ENCODE measurements at regions of chr2 and their contacts with region 1.

Region 1: GRCh38 chr2:47323009-47323821 is 79.7 kb upstream of the MSH2 start:
- DNase-seq: peak; percentile 68 to 69
- ATAC-seq: peak; percentile 93 to 97 (median 94)
- H3K4me3 ChIP-seq: no peak overlapping the region
- H3K27ac ChIP-seq: no peak overlapping the region
- H3K4me1 ChIP-seq: peaks cover 0 to 10% (median 4%) of the 10 kb centered on the region in 9 donors
- H3K27me3 ChIP-seq: no peaks in the 10 kb centered on the region
- CTCF ChIP-seq: peak; percentile 93 to 98 (median 96)

Region 2: GRCh38 chr2:46632349-46632748 is 690.9 kb before region 1 on chr2:
- intact Hi-C with region 1: loop called in 3 of 10 experiments (anchors 5 to 10 kb)
- DNase-seq: no peak
- ATAC-seq: peak in 1 of 8 donors; percentile 33
- H3K4me3 ChIP-seq: no peak overlapping the region
- H3K27ac ChIP-seq: no peak overlapping the region
- H3K4me1 ChIP-seq: no peaks in the 10 kb centered on the region
- H3K27me3 ChIP-seq: no peaks in the 10 kb centered on the region
- CTCF ChIP-seq: peak in 8 of 9 donors; percentile 43 to 74 (median 66)

Region 3: GRCh38 chr2:46915811-46916630 is 407.2 kb before region 1 on chr2:
- intact Hi-C with region 1: loop called in 7 of 10 experiments (anchors 1 to 5 kb)
- DNase-seq: peak; percentile 91 to 92
- ATAC-seq: peak; percentile 90 to 96 (median 95)
- H3K4me3 ChIP-seq: peak overlapping the region; percentile 81 to 100 (median 97)
- H3K27ac ChIP-seq: peak overlapping the region; percentile 89 to 99 (median 96)
- H3K4me1 ChIP-seq: peaks cover 7 to 53% (median 35%) of the 10 kb centered on the region in 9 donors
- H3K27me3 ChIP-seq: no peaks in the 10 kb centered on the region
- CTCF ChIP-seq: no peak

Region 4: GRCh38 chr2:46923041-46923528 is 400.1 kb before region 1 on chr2:
- intact Hi-C with region 1: loop called in 7 of 10 experiments (anchors 1 to 5 kb)
- DNase-seq: no peak
- ATAC-seq: no peak
- H3K4me3 ChIP-seq: no peak overlapping the region
- H3K27ac ChIP-seq: no peak overlapping the region
- H3K4me1 ChIP-seq: peaks cover 0 to 5% (median 0%) of the 10 kb centered on the region in 9 donors
- H3K27me3 ChIP-seq: no peaks in the 10 kb centered on the region
- CTCF ChIP-seq: no peak

Region 5: GRCh38 chr2:46988733-46989481 is 334.3 kb before region 1 on chr2:
- intact Hi-C with region 1: loop called in 1 of 10 experiments (anchors 1 kb)
- DNase-seq: peak in 1 of 2 donors; percentile 51
- ATAC-seq: peak in 4 of 8 donors; percentile 20 to 46 (median 32)
- H3K4me3 ChIP-seq: no peak overlapping the region
- H3K27ac ChIP-seq: peak overlapping the region in 8 of 10 donors; percentile 30 to 78 (median 63)
- H3K4me1 ChIP-seq: peaks cover 41 to 68% (median 59%) of the 10 kb centered on the region in 9 donors
- H3K27me3 ChIP-seq: no peaks in the 10 kb centered on the region
- CTCF ChIP-seq: peak in 5 of 9 donors; percentile 10 to 40 (median 29)

Region 6: DNA sequence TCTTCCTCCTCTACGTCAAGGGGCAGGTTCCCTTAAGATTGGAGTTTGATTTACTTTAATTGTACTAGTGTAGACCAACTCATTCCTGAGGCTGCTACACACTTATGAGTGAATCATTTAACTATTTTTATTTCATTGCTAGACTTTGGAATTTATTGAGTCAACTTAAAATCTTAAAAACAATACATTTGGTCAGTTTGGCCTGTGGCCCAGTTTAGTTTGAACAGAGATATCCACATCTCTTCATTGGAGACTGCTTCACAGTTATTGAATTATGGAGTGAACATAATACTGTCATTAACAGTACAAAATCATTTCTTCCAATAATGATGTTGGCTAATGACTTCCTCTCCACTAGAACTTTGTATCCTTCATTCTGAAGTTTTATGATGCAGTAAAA is 133.6 kb before region 1 on chr2:
- intact Hi-C with region 1: loop called in 1 of 10 experiments (anchors 10 kb)
- DNase-seq: no peak
- ATAC-seq: no peak
- H3K4me3 ChIP-seq: no peak overlapping the region
- H3K27ac ChIP-seq: no peak overlapping the region
- H3K4me1 ChIP-seq: peaks cover 0 to 26% (median 17%) of the 10 kb centered on the region in 9 donors
- H3K27me3 ChIP-seq: no peaks in the 10 kb centered on the region
- CTCF ChIP-seq: no peak

Region 7: DNA sequence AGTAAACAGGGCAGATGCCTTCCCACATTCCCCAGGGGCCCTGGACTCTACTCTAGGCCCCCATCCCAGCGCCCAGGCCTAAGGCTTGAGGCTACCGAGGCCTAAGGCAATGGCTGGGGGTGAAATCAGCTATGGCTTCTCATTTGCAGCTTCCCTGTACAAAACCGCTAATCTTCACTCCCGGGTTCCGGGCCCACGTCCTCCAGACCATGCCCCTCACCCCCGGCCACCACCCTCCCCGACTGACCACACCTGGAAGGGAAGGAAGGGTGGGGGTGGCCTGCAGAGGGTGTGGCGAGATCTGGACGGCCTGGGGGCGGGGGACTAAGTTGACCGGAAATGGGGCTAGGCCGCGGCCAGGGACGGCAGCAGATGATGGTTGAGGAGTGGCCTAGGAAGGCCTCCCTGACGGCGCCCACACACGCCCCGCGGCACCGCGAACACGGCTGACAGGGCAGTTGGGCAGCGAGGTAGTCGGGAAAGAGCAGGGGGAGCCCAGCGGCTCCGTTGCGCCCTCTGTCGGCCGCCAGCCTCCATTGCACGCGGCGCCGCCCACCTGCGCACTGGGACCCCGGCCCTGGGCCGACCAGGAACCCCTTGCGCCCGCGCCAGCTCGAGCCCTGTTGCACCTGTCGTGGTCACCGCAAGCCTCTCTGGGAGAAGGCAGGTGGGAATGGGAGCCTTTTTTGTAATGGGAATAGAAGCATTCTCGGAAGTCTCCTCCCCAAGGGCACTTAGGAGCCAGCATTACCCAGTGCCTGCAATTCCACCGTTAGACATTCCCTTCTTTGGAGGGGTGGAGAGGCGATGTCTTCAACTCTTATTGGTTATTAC is 51.0 kb before region 1 on chr2:
- intact Hi-C with region 1: loop called in 1 of 10 experiments (anchors 5 kb)
- DNase-seq: peak; percentile 75 to 76
- ATAC-seq: peak; percentile 77 to 85 (median 80)
- H3K4me3 ChIP-seq: peak overlapping the region in 9 of 10 donors; percentile 20 to 64 (median 48)
- H3K27ac ChIP-seq: peak overlapping the region; percentile 23 to 87 (median 72)
- H3K4me1 ChIP-seq: peaks cover 3 to 64% (median 52%) of the 10 kb centered on the region in 9 donors
- H3K27me3 ChIP-seq: no peaks in the 10 kb centered on the region
- CTCF ChIP-seq: peak; percentile 97 to 99 (median 98)

Region 8: GRCh38 chr2:47751875-47752357 is 428.7 kb after region 1 on chr2:
- intact Hi-C with region 1: no loop called
- DNase-seq: no peak
- ATAC-seq: no peak
- H3K4me3 ChIP-seq: no peak overlapping the region
- H3K27ac ChIP-seq: peak overlapping the region in 1 of 10 donors; percentile 58
- H3K4me1 ChIP-seq: peaks cover 0 to 18% (median 0%) of the 10 kb centered on the region in 9 donors
- H3K27me3 ChIP-seq: peaks cover 0 to 13% (median 0%) of the 10 kb centered on the region in 7 donors
- CTCF ChIP-seq: no peak